MCF 10A (cell line): ENCODE measurements at regions of chr3 and their contacts with region 1.

Region 1: GRCh38 chr3:140941434-140942220 is at the start of gene SLC25A36:
- DNase-seq: peak; percentile 99
- H3K4me3 Mint-ChIP-seq: peak within 1 kb of the TSS; percentile 95
- H3K27ac Mint-ChIP-seq: peak within 1 kb of the TSS; percentile 89
- H3K4me1 Mint-ChIP-seq: peaks cover 22% of the 10 kb centered on the region
- H3K27me3 Mint-ChIP-seq: no peaks in the 10 kb centered on the region
- CTCF ChIP-seq: no peak
- total RNA-seq, gene SLC25A36: 71.2 and 75.0 TPM in 2 replicates

Region 2: DNA sequence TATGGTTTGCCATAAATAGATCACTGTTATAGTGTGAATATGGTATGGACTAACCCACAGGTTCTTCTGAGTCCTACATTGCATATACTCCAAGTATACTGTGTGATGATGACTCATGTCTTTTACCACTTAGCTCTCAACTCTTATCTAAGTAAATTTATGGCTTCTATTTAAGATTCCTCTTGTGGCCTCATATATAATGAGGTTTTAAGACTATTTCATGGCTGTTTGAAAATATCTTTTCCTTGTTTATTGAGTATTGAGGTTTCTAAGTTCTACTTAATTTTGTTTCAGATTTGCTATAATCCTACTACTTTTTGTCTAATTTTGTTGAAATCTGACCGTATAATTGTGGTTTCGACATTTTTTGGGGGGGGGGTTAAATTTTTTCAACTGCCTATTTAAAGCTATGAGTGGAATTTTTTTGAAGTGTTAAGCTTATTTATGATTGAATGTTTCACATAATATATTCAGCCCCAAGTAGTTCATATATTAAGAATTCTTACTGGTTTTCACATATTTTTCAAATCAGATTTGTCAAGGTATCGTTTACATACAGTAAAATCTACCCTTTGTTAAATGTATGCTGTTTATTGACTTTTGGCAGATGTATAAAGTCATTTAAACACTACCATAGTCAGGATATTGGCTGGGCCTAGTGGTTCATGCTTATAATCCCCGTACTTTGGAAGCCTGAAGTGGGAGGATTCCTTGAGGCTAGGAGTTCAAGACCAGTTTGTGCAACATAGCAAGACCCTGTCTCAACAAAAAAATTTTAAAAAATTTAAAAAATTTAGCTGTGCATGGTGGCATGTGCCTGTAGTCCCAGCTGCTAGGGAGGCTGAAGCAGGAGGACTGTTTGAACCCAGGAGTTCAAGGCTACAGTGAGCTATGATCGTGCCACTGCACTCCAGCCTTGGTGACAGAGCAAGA is 11.7 kb after region 1 on chr3:
- CTCF ChIA-PET with region 1: interaction called, 4 read pairs
- POLR2A ChIA-PET with region 1: interaction called, 39 read pairs
- intact Hi-C with region 1: no loop called
- DNase-seq: peak; percentile 38
- H3K4me3 Mint-ChIP-seq: no peak overlapping the region
- H3K27ac Mint-ChIP-seq: no peak overlapping the region
- H3K4me1 Mint-ChIP-seq: peaks cover 42% of the 10 kb centered on the region
- H3K27me3 Mint-ChIP-seq: no peaks in the 10 kb centered on the region
- CTCF ChIP-seq: no peak

Region 3: GRCh38 chr3:141039589-141039988 is 98.0 kb after region 1 on chr3:
- CTCF ChIA-PET with region 1: no interaction called
- POLR2A ChIA-PET with region 1: no interaction called
- intact Hi-C with region 1: no loop called
- DNase-seq: no peak
- H3K4me3 Mint-ChIP-seq: no peak overlapping the region
- H3K27ac Mint-ChIP-seq: no peak overlapping the region
- H3K4me1 Mint-ChIP-seq: no peaks in the 10 kb centered on the region
- H3K27me3 Mint-ChIP-seq: peaks cover 18% of the 10 kb centered on the region
- CTCF ChIP-seq: no peak